ENCODE measurements at regions of chr21 and their contacts with region 1.

Region 1: GRCh38 chr21:26170471-26171257 is at the start of gene APP:
- DNase-seq: no peak
- H3K4me3 ChIP-seq: peak within 1 kb of the TSS; percentile 87
- CTCF ChIP-seq: peak; percentile 83

Region 2: GRCh38 chr21:25895565-25896205 is 275.0 kb before region 1 on chr21:
- CTCF ChIA-PET with region 1: interaction called, 50 read pairs
- POLR2A ChIA-PET with region 1: no interaction called
- DNase-seq: no peak
- H3K4me3 ChIP-seq: no peak overlapping the region
- CTCF ChIP-seq: peak; percentile 27

Region 3: GRCh38 chr21:25901330-25901979 is 269.2 kb before region 1 on chr21:
- CTCF ChIA-PET with region 1: interaction called, 50 read pairs
- POLR2A ChIA-PET with region 1: no interaction called
- DNase-seq: no peak
- H3K4me3 ChIP-seq: no peak overlapping the region
- CTCF ChIP-seq: no peak

Region 4: DNA sequence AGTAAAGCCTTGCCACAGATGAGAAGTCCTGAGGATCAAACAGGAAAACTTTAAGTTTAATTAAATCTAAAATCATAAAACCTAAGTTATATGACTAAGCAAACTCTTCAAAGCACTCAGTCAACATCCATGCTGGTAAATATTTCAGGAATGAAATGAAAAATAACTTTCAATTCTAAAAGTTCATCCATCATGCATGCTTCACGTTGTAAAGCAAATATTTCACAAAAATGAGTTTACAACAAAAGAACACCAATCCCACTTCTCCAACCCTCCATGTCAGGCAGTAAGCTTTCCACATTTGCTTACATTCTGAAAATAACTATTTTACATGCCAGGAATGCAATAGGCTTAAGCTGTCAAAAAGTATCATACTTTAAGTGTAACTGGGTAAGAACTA is 16.9 kb before region 1 on chr21:
- CTCF ChIA-PET with region 1: interaction called, 94 read pairs
- POLR2A ChIA-PET with region 1: no interaction called
- DNase-seq: peak; percentile 37
- H3K4me3 ChIP-seq: no peak overlapping the region
- CTCF ChIP-seq: no peak